ENCODE measurements at regions of chr7 and their contacts with region 1.

Region 1: GRCh38 chr7:135662373-135663114 is at the start of gene STMP1:
- DNase-seq: peak; percentile 97
- H3K4me3 Mint-ChIP-seq: peak within 1 kb of the TSS; percentile 95
- H3K27ac Mint-ChIP-seq: peak within 1 kb of the TSS; percentile 96
- H3K4me1 Mint-ChIP-seq: peaks cover 41% of the 10 kb centered on the region
- H3K27me3 Mint-ChIP-seq: no peaks in the 10 kb centered on the region
- total RNA-seq, gene STMP1: 17.3 to 17.8 TPM

Region 2: GRCh38 chr7:134737566-134738345 is 924.8 kb before region 1 on chr7:
- CTCF ChIA-PET with region 1: no interaction called
- POLR2A ChIA-PET with region 1: no interaction called
- intact Hi-C with region 1: loop called (anchors 10 kb)
- DNase-seq: peak; percentile 65
- H3K4me3 Mint-ChIP-seq: no peak overlapping the region
- H3K27ac Mint-ChIP-seq: peak overlapping the region; percentile 88
- H3K4me1 Mint-ChIP-seq: peaks cover 41% of the 10 kb centered on the region
- H3K27me3 Mint-ChIP-seq: no peaks in the 10 kb centered on the region

Region 3: DNA sequence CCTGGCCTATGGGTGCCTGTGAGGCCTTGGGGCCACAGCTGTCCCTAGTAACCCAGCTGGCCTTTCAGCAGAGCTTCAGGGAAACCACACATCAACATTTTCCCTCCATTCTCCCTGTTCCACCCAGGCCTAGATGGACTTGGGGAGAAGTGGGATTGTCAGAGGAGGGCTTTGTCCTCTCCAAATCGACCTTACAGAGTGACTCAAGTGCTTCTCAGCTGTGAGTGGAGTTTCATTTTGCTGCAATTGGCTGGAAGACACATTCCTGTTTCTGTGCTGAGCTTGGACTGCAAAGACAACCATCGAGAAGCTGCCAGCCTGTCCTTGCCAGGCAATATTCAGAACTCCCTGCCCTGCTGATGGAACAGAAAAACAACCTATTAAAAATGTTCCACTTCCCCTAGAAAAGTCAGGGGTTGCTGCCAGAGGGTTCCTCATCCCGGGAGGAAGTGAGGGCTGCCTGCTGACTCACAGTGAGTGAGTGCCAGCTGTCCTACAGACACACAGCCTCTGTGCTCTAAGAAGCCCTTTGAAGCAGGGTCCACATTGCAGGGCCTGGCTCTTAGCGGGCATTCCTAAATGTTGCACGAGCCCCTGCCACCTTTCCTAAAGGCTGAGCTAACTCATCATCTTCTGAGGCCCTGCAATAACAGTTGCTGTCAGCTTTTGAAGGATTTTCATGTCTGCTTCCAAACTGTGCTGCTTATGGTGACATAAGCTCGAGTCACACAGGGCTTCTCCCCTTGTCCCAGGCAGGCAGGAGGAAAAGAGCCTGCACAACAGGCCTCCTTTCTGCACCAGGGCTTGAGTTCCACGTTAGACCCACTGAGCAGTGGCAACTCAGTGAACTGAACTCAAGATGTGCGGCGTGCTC is 408.4 kb before region 1 on chr7:
- CTCF ChIA-PET with region 1: no interaction called
- POLR2A ChIA-PET with region 1: no interaction called
- intact Hi-C with region 1: no loop called
- DNase-seq: no peak
- H3K4me3 Mint-ChIP-seq: no peak overlapping the region
- H3K27ac Mint-ChIP-seq: no peak overlapping the region
- H3K4me1 Mint-ChIP-seq: peaks cover 11% of the 10 kb centered on the region
- H3K27me3 Mint-ChIP-seq: no peaks in the 10 kb centered on the region

Region 4: GRCh38 chr7:135281363-135281949 is 381.1 kb before region 1 on chr7:
- CTCF ChIA-PET with region 1: no interaction called
- POLR2A ChIA-PET with region 1: no interaction called
- intact Hi-C with region 1: loop called (anchors 5 kb)
- DNase-seq: peak; percentile 85
- H3K4me3 Mint-ChIP-seq: no peak overlapping the region
- H3K27ac Mint-ChIP-seq: peak overlapping the region; percentile 19
- H3K4me1 Mint-ChIP-seq: peaks cover 19% of the 10 kb centered on the region
- H3K27me3 Mint-ChIP-seq: peaks cover 10% of the 10 kb centered on the region

Region 5: DNA sequence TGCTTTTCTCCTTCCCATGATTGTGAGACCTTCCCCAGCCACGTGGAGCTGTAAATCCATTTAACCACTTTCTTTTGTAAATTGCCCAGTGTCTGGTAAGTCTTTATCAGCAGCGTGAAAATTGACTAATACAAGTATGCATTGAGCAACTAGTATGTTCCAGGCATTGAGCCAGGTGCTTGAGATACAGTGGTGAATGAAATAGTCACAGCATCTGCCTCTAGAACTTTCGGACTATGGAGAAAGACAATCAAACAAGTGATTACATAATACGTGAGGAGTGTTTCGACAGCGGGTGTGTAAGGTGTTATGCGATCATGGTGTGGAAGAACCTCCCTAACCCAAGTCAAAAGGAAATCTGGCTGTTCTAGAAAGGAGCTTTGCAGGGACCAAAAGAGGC is 126.4 kb before region 1 on chr7:
- CTCF ChIA-PET with region 1: no interaction called
- POLR2A ChIA-PET with region 1: no interaction called
- intact Hi-C with region 1: no loop called
- DNase-seq: no peak
- H3K4me3 Mint-ChIP-seq: no peak overlapping the region
- H3K27ac Mint-ChIP-seq: no peak overlapping the region
- H3K4me1 Mint-ChIP-seq: no peaks in the 10 kb centered on the region
- H3K27me3 Mint-ChIP-seq: peaks cover 15% of the 10 kb centered on the region

Region 6: GRCh38 chr7:135645296-135645904 is 17.1 kb before region 1 on chr7:
- CTCF ChIA-PET with region 1: interaction called, 40 read pairs
- POLR2A ChIA-PET with region 1: interaction called, 3 read pairs
- intact Hi-C with region 1: no loop called
- DNase-seq: no peak
- H3K4me3 Mint-ChIP-seq: no peak overlapping the region
- H3K27ac Mint-ChIP-seq: no peak overlapping the region
- H3K4me1 Mint-ChIP-seq: no peaks in the 10 kb centered on the region
- H3K27me3 Mint-ChIP-seq: no peaks in the 10 kb centered on the region

Region 7: DNA sequence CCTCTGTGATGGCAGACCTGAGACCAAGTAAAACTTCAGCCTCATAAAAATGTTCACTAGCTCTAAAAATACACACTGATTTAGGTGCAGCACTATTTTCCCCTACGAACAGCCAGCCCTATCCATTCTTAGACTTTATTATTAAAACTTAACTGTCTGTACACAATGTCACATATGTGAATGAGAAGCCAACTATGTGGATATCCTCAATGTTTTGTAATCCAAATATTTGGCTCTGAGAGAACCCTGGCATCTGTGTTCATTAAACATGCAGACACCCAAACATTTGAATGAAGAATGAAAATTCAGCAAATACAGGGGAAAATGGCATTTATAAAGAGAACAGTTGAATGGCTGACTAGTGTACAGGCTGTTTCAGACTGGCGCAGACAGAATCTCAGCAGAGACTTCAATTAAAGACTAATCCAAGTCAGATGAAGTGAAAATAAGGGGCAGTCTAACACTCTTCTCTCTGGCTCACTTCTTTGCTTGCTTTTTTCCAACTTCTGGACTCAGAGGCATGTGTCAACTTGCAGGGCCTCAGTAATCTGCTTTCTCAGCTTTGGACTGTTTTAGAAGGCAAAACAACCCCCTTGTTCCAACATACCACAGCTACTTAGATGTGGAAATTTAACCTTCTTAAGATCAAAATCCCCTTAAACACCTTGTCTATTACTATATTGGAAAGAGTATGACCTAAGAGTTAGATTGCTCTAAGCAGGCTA is 133.5 kb after region 1 on chr7:
- CTCF ChIA-PET with region 1: no interaction called
- POLR2A ChIA-PET with region 1: no interaction called
- intact Hi-C with region 1: loop called (anchors 5 kb)
- DNase-seq: no peak
- H3K4me3 Mint-ChIP-seq: no peak overlapping the region
- H3K27ac Mint-ChIP-seq: no peak overlapping the region
- H3K4me1 Mint-ChIP-seq: peaks cover 2% of the 10 kb centered on the region
- H3K27me3 Mint-ChIP-seq: peaks cover 18% of the 10 kb centered on the region

Region 8: GRCh38 chr7:136030862-136031318 is 368.3 kb after region 1 on chr7:
- CTCF ChIA-PET with region 1: no interaction called
- POLR2A ChIA-PET with region 1: interaction called, 6 read pairs
- intact Hi-C with region 1: loop called (anchors 2 kb)
- DNase-seq: peak; percentile 34
- H3K4me3 Mint-ChIP-seq: no peak overlapping the region
- H3K27ac Mint-ChIP-seq: peak overlapping the region; percentile 87
- H3K4me1 Mint-ChIP-seq: peaks cover 61% of the 10 kb centered on the region
- H3K27me3 Mint-ChIP-seq: no peaks in the 10 kb centered on the region

Region 9: DNA sequence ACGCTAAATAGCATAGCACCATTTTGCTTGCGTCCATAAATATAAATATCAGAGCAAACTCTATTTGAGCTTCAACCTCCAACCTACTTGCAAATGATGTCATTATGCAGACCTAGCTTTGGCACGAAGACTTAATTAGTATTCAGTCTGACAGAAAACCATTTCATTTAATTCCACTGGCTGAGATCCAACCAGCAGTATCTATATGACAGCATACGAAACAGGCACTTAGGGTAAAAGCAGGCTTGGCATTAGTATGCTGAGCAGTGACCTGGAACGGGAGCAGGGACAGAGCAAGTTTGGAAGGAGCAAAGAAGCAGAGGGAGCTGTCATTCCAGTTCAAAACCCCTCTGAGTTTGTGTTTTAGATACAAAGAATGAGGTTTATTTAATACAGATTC is 893.4 kb after region 1 on chr7:
- CTCF ChIA-PET with region 1: no interaction called
- POLR2A ChIA-PET with region 1: no interaction called
- intact Hi-C with region 1: no loop called
- DNase-seq: no peak
- H3K4me3 Mint-ChIP-seq: no peak overlapping the region
- H3K27ac Mint-ChIP-seq: no peak overlapping the region
- H3K4me1 Mint-ChIP-seq: no peaks in the 10 kb centered on the region
- H3K27me3 Mint-ChIP-seq: no peaks in the 10 kb centered on the region

Measured in activated CD4-positive, alpha-beta memory T cell treated with anti-CD3 and anti-CD28 coated beads for 36 hours (primary cell).